ENCODE measurements at regions of chr4 and their contacts with region 1.

Region 1: DNA sequence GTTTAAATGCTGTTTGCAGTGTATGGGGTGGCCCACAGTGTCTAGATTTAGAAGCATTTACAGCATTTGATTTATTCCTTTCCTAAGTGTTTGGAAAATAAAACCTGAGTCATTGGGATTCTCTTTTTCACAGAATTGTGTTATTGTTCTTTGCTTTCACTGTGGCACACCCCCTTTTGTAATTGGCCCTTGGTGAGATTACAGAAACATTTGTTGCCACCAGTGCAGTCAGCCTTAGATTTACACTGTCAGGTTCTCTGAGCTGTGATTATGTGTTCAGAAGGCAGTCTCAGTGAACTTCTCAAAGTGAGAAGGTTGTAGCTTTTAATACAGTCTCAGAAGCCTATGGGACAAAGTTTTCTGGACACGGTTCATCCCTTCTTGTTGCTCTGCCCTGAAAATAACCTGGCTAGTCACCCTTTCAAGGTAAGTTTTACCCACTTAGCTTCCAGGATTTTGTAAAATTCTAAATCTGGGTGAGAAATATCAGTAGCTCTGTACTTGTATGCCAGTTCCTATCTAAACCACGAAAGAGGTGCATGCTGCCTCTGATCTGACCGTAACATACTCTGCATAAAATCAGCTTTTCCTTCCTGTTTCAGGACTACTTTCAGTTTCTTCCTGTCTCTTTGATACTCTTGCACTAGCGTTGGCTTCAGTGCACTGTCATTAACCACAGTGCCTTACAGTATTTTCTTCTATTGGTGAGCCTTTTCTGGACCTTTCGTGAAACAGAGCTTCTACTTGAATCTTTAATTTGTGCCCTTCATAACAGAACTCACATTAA is 12.6 kb downstream of the RUFY3 start:
- DNase-seq: peak; percentile 59 to 73 (median 66)
- H3K4me3 ChIP-seq: peak overlapping the region; percentile 15 to 46
- H3K4me3 Mint-ChIP-seq: peak overlapping the region; percentile 67 to 88 (median 80)
- H3K27ac ChIP-seq: peak overlapping the region; percentile 71
- H3K27ac Mint-ChIP-seq: peak overlapping the region; percentile 63 to 96 (median 88)
- H3K4me1 ChIP-seq: peaks cover 49% of the 10 kb centered on the region
- H3K4me1 Mint-ChIP-seq: peaks cover 31 to 50% (median 42%) of the 10 kb centered on the region in 4 donors
- H3K27me3 ChIP-seq: no peaks in the 10 kb centered on the region
- H3K27me3 Mint-ChIP-seq: no peaks in the 10 kb centered on the region

Region 2: GRCh38 chr4:70681704-70682103 is 52.7 kb before region 1 on chr4:
- CTCF ChIA-PET with region 1: interaction called, 17 read pairs
- POLR2A ChIA-PET with region 1: interaction called, 5 read pairs
- intact Hi-C with region 1: no loop called
- DNase-seq: no peak
- H3K4me3 ChIP-seq: no peak overlapping the region
- H3K4me3 Mint-ChIP-seq: no peak overlapping the region
- H3K27ac ChIP-seq: no peak overlapping the region
- H3K27ac Mint-ChIP-seq: no peak overlapping the region
- H3K4me1 ChIP-seq: peaks cover 17% of the 10 kb centered on the region
- H3K4me1 Mint-ChIP-seq: peaks cover 5 to 17% (median 8%) of the 10 kb centered on the region in 4 donors
- H3K27me3 ChIP-seq: no peaks in the 10 kb centered on the region
- H3K27me3 Mint-ChIP-seq: peaks cover 1 to 3% of the 10 kb centered on the region in 2 donors

Region 3: DNA sequence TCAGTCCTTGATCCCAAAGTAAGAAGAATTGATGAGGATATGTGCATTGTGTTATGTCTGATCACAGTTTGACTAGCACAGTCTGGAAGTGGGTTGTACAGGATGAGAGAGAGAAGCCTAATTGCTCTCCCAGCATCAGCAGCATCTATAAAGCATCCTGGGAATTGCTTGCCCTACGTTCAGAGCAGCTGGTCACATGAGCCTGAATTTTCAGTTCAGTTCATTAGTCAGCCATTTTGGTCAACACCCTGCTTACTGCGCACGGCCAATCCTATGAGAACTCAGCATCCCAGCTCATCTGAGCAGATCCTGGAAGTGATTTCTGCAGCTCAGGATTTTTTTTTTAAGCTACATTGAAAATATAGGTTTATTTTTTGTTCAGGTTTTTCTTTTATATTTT is 12.6 kb before region 1 on chr4 and contains the start of gene RUFY3:
- CTCF ChIA-PET with region 1: interaction called, 74 read pairs
- POLR2A ChIA-PET with region 1: interaction called, 23 read pairs
- intact Hi-C with region 1: no loop called
- DNase-seq: no peak
- H3K4me3 ChIP-seq: no peak within 1 kb of the TSS
- H3K4me3 Mint-ChIP-seq: peak within 1 kb of the TSS; percentile 20 to 72 (median 54)
- H3K27ac ChIP-seq: no peak within 1 kb of the TSS
- H3K27ac Mint-ChIP-seq: peak within 1 kb of the TSS; percentile 67 to 86 (median 76)
- H3K4me1 ChIP-seq: peaks cover 17% of the 10 kb centered on the region
- H3K4me1 Mint-ChIP-seq: peaks cover 14 to 20% (median 15%) of the 10 kb centered on the region in 4 donors
- H3K27me3 ChIP-seq: no peaks in the 10 kb centered on the region
- H3K27me3 Mint-ChIP-seq: no peaks in the 10 kb centered on the region
- total RNA-seq, gene RUFY3: 36.2 TPM

Region 4: GRCh38 chr4:70759627-70760026 is 25.3 kb after region 1 on chr4:
- CTCF ChIA-PET with region 1: interaction called, 36 read pairs
- POLR2A ChIA-PET with region 1: interaction called, 15 read pairs
- intact Hi-C with region 1: no loop called
- DNase-seq: peak in 2 of 5 donors; percentile 7 to 21
- H3K4me3 ChIP-seq: no peak overlapping the region
- H3K4me3 Mint-ChIP-seq: peak overlapping the region; percentile 11 to 83 (median 64)
- H3K27ac ChIP-seq: no peak overlapping the region
- H3K27ac Mint-ChIP-seq: peak overlapping the region in 6 of 7 donors; percentile 7 to 86 (median 42)
- H3K4me1 ChIP-seq: peaks cover 17% of the 10 kb centered on the region
- H3K4me1 Mint-ChIP-seq: peaks cover 13 to 18% (median 16%) of the 10 kb centered on the region in 4 donors
- H3K27me3 ChIP-seq: no peaks in the 10 kb centered on the region
- H3K27me3 Mint-ChIP-seq: no peaks in the 10 kb centered on the region

Region 5: DNA sequence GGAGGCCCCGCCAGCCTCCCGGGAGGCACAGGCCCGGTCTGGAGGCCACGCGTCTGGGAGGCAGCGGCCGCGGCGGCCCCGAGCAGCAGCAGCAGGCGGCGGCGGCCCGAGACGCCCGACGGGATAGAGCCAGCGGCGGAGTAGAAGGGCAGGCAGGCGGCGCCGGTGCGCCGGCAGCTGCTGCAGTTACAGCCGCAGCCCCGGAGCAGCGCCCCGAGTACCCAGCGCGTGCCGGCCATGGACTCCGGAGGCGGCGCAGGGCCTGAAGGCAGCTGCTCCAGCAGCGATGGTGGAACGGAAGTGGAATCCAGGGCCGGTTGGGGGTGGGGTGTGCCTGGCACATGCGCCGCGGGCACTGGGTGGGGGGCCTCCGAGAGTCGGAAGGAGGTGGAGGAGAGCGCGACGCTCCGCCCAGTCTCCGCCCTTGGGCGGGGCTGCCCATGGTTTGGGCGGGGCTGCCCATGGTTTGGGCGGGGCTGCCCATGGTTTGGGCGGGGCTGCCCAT is 105.3 kb after region 1 on chr4 and contains the start of gene GRSF1:
- CTCF ChIA-PET with region 1: interaction called, 39 read pairs
- POLR2A ChIA-PET with region 1: interaction called, 65 read pairs
- intact Hi-C with region 1: loop called (anchors 2 kb)
- DNase-seq: peak; percentile 95 to 96 (median 95)
- H3K4me3 ChIP-seq: peak within 1 kb of the TSS; percentile 58 to 69
- H3K4me3 Mint-ChIP-seq: peak within 1 kb of the TSS; percentile 95 to 99 (median 98)
- H3K27ac ChIP-seq: peak within 1 kb of the TSS; percentile 77
- H3K27ac Mint-ChIP-seq: peak within 1 kb of the TSS; percentile 94 to 99 (median 97)
- H3K4me1 ChIP-seq: peaks cover 32% of the 10 kb centered on the region
- H3K4me1 Mint-ChIP-seq: peaks cover 16 to 39% (median 27%) of the 10 kb centered on the region in 4 donors
- H3K27me3 ChIP-seq: no peaks in the 10 kb centered on the region
- H3K27me3 Mint-ChIP-seq: no peaks in the 10 kb centered on the region
- total RNA-seq, gene GRSF1: 47.0 to 54.3 TPM